WTC11 (cell line): ENCODE measurements at regions of chr1 and their contacts with region 1.

Region 1: GRCh38 chr1:109790735-109791494 is 27.2 kb upstream of the EPS8L3 start:
- DNase-seq: peak; percentile 53
- ATAC-seq: peak; percentile 19
- H3K4me3 Mint-ChIP-seq: no peak overlapping the region
- H3K27ac Mint-ChIP-seq: no peak overlapping the region
- H3K4me1 Mint-ChIP-seq: peaks cover 34% of the 10 kb centered on the region
- H3K27me3 Mint-ChIP-seq: peaks cover 4% of the 10 kb centered on the region; the same call in 1 of the 2 replicates
- CTCF ChIP-seq: no peak

Region 2: GRCh38 chr1:109298666-109299557 is 492.0 kb before region 1 on chr1:
- CTCF ChIA-PET with region 1: no interaction called
- POLR2A ChIA-PET with region 1: no interaction called
- DNase-seq: no peak
- ATAC-seq: no peak
- H3K4me3 Mint-ChIP-seq: no peak overlapping the region
- H3K27ac Mint-ChIP-seq: peak overlapping the region; percentile 34; the same call in 1 of the 2 replicates
- H3K4me1 Mint-ChIP-seq: peaks cover 7% of the 10 kb centered on the region; the same call in 1 of the 2 replicates
- H3K27me3 Mint-ChIP-seq: no peaks in the 10 kb centered on the region
- CTCF ChIP-seq: no peak

Region 3: GRCh38 chr1:109570417-109570827 is 220.5 kb before region 1 on chr1:
- CTCF ChIA-PET with region 1: no interaction called
- POLR2A ChIA-PET with region 1: no interaction called
- DNase-seq: no peak
- ATAC-seq: peak; percentile 74
- H3K4me3 Mint-ChIP-seq: no peak overlapping the region
- H3K27ac Mint-ChIP-seq: no peak overlapping the region
- H3K4me1 Mint-ChIP-seq: peaks cover 7% of the 10 kb centered on the region
- H3K27me3 Mint-ChIP-seq: no peaks in the 10 kb centered on the region
- CTCF ChIP-seq: no peak

Region 4: DNA sequence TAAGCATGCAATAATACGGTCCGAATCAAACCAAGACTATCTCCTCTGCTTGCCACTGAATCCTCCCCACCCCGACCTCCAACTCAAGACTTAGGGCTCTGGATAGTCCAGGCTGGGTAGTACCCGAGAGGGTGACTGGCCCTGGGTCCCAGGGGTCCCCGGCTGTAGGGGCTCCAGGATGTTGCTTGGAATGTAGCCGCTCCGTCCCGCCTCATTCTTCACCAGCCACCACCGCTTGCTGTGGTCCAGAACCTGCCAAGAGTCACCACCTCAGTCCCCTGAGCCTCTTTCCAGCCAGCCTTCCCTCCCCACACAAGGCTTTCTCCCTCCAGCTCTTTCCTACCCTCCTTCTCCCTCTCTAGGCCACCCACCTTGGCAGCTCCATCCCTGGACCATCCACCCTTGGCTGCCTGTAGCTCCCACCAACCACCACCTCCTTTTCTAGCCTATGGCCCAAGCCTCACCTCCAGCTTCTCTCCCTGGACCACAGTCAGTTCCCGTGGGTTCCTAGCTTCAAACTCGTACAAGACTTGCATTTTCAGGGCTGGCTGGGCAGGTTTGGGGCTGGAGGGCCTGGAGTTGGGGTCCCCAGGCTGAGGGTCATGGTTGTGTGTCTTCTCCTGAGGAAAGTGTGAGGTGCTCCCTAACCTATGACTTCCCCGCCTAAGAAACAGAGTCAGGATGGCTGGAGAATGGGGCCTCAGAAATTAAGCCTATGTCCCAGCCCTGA is 39.2 kb before region 1 on chr1:
- CTCF ChIA-PET with region 1: no interaction called
- POLR2A ChIA-PET with region 1: no interaction called
- DNase-seq: no peak
- ATAC-seq: no peak
- H3K4me3 Mint-ChIP-seq: no peak overlapping the region
- H3K27ac Mint-ChIP-seq: no peak overlapping the region
- H3K4me1 Mint-ChIP-seq: no peaks in the 10 kb centered on the region
- H3K27me3 Mint-ChIP-seq: peaks cover 19% of the 10 kb centered on the region
- CTCF ChIP-seq: no peak

Region 5: GRCh38 chr1:109802901-109803561 is 12.1 kb after region 1 on chr1:
- CTCF ChIA-PET with region 1: interaction called, 15 read pairs
- POLR2A ChIA-PET with region 1: no interaction called
- DNase-seq: no peak
- ATAC-seq: no peak
- H3K4me3 Mint-ChIP-seq: no peak overlapping the region
- H3K27ac Mint-ChIP-seq: no peak overlapping the region
- H3K4me1 Mint-ChIP-seq: no peaks in the 10 kb centered on the region
- H3K27me3 Mint-ChIP-seq: no peaks in the 10 kb centered on the region
- CTCF ChIP-seq: no peak

Region 6: DNA sequence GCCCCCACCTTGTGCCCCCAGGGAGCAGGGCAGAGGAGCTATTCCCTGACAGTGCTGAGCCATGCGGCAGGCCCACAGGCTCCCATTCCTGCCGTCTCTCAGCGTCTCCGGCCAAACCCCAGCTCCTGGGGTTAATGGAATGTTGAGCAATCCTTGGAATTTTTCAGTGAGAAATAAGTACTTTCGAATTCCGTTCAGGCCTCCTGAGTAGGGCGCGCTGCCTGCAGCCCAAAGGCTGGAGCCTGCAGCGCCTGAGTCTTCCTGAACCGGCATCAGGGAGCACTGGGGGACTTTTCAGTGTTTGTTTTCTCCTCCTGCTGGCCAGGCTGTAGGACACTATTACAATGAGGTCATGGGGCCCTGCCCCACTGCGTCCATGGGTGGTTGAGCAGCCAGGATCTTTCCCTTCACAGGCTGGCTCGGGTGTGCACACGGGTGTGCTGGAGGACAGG is 86.4 kb after region 1 on chr1:
- CTCF ChIA-PET with region 1: interaction called, 26 read pairs
- POLR2A ChIA-PET with region 1: no interaction called
- DNase-seq: peak; percentile 64
- ATAC-seq: peak; percentile 88
- H3K4me3 Mint-ChIP-seq: no peak overlapping the region
- H3K27ac Mint-ChIP-seq: peak overlapping the region; percentile 89
- H3K4me1 Mint-ChIP-seq: peaks cover 65% of the 10 kb centered on the region
- H3K27me3 Mint-ChIP-seq: no peaks in the 10 kb centered on the region
- CTCF ChIP-seq: no peak

Region 7: DNA sequence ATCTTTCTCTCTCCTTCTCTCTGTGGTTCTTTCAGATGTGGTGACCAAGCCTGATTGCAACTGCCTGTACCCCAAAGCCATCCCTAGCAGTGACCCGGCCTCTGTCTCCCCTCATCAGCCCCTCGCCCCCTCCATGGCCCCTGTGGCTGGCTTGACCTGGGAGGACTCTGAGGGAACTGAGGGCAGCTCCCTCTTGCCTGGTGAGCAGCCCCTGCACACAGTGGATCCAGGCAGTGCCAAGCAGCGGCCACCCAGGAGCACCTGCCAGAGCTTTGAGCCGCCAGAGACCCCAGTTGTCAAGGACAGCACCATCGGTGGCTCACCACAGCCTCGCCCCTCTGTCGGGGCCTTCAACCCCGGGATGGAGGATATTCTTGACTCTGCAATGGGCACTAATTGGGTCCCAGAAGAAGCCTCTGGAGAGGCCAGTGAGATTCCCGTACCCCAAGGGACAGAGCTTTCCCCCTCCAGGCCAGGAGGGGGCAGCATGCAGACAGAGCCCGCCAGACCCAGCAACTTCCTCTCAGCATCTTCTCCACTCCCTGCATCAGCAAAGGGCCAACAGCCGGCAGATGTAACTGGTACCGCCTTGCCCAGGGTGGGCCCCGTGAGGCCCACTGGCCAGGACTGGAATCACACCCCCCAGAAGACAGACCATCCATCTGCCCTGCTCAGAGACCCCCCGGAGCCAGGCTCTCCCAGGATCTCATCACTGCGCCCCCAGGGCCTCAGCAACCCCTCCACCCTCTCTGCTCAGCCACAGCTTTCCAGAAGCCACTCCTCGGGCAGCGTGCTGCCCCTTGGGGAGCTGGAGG is 132.4 kb after region 1 on chr1:
- CTCF ChIA-PET with region 1: interaction called, 13 read pairs
- POLR2A ChIA-PET with region 1: no interaction called
- DNase-seq: peak; percentile 73
- ATAC-seq: peak; percentile 96
- H3K4me3 Mint-ChIP-seq: 0 out of 2 replicates have a peak overlapping the region, but pooled peaks have one; percentile 16
- H3K27ac Mint-ChIP-seq: no peak overlapping the region
- H3K4me1 Mint-ChIP-seq: no peaks in the 10 kb centered on the region
- H3K27me3 Mint-ChIP-seq: no peaks in the 10 kb centered on the region
- CTCF ChIP-seq: peak; percentile 72